Activated CD4-positive, alpha-beta T cell treated with anti-CD3 and anti-CD28 coated beads for 36 hours (primary cell): ENCODE measurements at regions of chr7 and their contacts with region 1.

Region 1: GRCh38 chr7:37408291-37409228 is 40.1 kb downstream of the ELMO1 start:
- DNase-seq: peak; percentile 49
- ATAC-seq: peak; percentile 55
- H3K4me3 Mint-ChIP-seq: peak overlapping the region; percentile 71
- H3K27ac Mint-ChIP-seq: peak overlapping the region; percentile 94
- H3K4me1 Mint-ChIP-seq: peaks cover 81% of the 10 kb centered on the region
- H3K27me3 Mint-ChIP-seq: no peaks in the 10 kb centered on the region

Region 2: DNA sequence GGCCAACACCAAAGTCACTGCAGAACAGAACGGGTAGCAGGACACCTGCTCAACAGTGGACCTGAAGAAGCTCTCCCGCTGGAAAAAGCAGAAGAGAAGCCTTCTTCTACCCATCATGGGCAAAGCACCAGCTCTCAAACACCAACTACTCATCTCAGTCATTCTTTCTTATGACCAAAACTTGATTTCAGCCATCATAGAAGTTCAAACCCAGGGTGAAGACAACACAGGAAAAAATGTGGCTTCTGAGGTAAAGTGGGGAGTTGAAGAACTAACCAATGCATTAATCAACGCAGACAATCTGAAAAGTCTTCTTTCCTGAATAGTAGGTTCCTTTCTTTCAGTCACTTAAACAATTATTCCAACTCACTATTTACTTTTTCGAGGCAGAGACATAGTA is 43.2 kb before region 1 on chr7:
- CTCF ChIA-PET with region 1: interaction called, 8 read pairs
- POLR2A ChIA-PET with region 1: interaction called, 3 read pairs
- intact Hi-C with region 1: loop called (anchors 1 to 2 kb)
- DNase-seq: peak; percentile 16
- ATAC-seq: peak; percentile 48
- H3K4me3 Mint-ChIP-seq: no peak overlapping the region
- H3K27ac Mint-ChIP-seq: peak overlapping the region; percentile 99
- H3K4me1 Mint-ChIP-seq: peaks cover 85% of the 10 kb centered on the region
- H3K27me3 Mint-ChIP-seq: no peaks in the 10 kb centered on the region

Region 3: GRCh38 chr7:37376386-37376785 is 32.2 kb before region 1 on chr7:
- CTCF ChIA-PET with region 1: interaction called, 4 read pairs
- POLR2A ChIA-PET with region 1: no interaction called
- intact Hi-C with region 1: loop called in 1 of 2 experiments (anchors 2 kb)
- DNase-seq: peak; percentile 75
- ATAC-seq: peak; percentile 82
- H3K4me3 Mint-ChIP-seq: peak overlapping the region; percentile 9
- H3K27ac Mint-ChIP-seq: peak overlapping the region; percentile 82
- H3K4me1 Mint-ChIP-seq: peaks cover 71% of the 10 kb centered on the region
- H3K27me3 Mint-ChIP-seq: no peaks in the 10 kb centered on the region

Region 4: DNA sequence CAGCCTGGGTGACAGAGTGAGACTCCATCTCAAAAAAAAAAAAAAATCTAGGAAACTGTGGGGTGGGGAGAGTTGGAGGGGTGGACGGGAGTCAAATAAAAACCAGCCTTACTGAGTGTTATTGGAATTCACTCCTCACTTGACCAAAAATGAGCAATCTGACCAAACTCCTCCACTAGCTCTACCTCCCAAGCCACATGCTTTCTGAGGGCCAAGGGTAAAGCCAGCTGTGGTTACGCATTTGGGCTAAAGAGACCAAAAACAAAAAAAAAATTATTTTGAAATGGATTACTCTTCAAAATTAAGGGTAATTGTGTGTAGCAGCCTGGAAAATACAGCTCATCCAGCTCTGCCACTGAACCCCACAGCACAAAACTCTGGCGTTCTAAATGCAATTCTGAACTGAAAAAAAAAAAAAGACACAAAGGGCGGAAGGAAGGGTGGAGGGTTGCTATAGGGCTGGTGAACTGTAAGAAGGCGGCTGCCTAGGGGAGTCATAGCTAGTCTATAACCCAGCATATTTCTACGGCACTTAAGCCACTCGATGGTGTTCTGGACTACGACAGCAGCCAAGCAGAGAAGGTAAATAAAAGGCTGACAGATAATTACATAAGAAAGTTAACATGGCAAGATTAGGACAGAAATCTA is 32.3 kb after region 1 on chr7:
- CTCF ChIA-PET with region 1: interaction called, 3 read pairs
- POLR2A ChIA-PET with region 1: no interaction called
- intact Hi-C with region 1: loop called (anchors 1 kb)
- DNase-seq: peak; percentile 67
- ATAC-seq: peak; percentile 76
- H3K4me3 Mint-ChIP-seq: peak overlapping the region; percentile 61
- H3K27ac Mint-ChIP-seq: peak overlapping the region; percentile 86
- H3K4me1 Mint-ChIP-seq: peaks cover 89% of the 10 kb centered on the region
- H3K27me3 Mint-ChIP-seq: no peaks in the 10 kb centered on the region